PC-9 (cell line): ENCODE measurements at regions of chr11 and their contacts with region 1.

Region 1: DNA sequence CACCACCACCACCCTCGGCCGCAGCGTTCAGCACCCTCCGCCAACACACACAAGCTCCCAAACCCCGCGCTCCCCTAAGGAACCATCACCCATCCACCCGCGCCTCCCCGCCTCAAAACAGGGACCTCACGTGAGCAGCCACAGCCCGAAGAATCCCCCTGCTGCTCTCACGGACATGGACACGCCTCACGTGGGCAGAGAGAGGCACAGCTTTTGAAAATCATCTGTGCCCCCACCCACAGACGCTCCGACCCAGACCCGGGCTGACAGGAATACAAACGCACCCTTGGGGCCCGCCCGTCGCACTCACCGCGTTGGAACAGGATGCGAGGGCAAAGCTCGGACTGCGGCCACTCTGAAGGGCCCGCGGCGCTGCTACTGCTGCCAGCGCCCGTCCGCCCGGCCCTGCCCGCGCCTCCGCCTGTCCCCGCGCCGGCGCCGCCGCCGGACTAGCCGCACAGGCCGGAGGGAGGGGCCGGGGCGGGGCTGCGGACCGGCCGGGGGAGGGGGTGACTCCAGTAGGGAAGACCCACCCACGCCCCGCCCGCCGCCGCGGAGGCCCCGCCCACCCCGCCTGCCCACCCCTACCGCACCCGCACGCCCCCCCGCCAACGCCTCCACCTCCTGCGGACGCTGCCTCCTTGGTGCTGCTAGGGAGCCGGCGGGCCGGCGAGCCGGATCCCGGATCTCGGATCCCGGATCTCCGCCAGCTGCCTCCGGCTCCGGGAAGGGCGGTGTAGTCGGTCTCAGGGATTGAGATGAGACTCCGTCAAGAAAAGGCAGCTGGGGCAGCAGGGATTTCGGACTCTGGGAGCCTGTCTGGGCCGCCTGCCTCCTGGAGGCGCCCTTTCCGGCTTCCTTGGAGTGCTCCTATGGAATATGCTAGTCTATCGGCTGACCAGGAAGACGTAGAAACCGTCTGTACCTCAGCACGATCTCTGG is at the start of gene TRIM3:
- DNase-seq: peak; percentile 63 to 78
- H3K4me3 ChIP-seq: peak within 1 kb of the TSS; percentile 71; the same call in 1 of the 2 replicates
- H3K27ac ChIP-seq: peak within 1 kb of the TSS; percentile 68
- H3K4me1 ChIP-seq: no peaks in the 10 kb centered on the region
- H3K27me3 ChIP-seq: no peaks in the 10 kb centered on the region
- CTCF ChIP-seq: peak; percentile 22; the same call in 1 of the 2 replicates
- total RNA-seq, gene TRIM3: 7.1 and 9.0 TPM in 2 replicates

Region 2: GRCh38 chr11:6402561-6402981 is 71.2 kb before region 1 on chr11:
- CTCF ChIA-PET with region 1: no interaction called
- POLR2A ChIA-PET with region 1: no interaction called
- intact Hi-C with region 1: no loop called
- DNase-seq: no peak
- H3K4me3 ChIP-seq: no peak overlapping the region
- H3K27ac ChIP-seq: no peak overlapping the region
- H3K4me1 ChIP-seq: peaks cover 8% of the 10 kb centered on the region; the same call in 1 of the 2 replicates
- H3K27me3 ChIP-seq: no peaks in the 10 kb centered on the region
- CTCF ChIP-seq: no peak

Region 3: DNA sequence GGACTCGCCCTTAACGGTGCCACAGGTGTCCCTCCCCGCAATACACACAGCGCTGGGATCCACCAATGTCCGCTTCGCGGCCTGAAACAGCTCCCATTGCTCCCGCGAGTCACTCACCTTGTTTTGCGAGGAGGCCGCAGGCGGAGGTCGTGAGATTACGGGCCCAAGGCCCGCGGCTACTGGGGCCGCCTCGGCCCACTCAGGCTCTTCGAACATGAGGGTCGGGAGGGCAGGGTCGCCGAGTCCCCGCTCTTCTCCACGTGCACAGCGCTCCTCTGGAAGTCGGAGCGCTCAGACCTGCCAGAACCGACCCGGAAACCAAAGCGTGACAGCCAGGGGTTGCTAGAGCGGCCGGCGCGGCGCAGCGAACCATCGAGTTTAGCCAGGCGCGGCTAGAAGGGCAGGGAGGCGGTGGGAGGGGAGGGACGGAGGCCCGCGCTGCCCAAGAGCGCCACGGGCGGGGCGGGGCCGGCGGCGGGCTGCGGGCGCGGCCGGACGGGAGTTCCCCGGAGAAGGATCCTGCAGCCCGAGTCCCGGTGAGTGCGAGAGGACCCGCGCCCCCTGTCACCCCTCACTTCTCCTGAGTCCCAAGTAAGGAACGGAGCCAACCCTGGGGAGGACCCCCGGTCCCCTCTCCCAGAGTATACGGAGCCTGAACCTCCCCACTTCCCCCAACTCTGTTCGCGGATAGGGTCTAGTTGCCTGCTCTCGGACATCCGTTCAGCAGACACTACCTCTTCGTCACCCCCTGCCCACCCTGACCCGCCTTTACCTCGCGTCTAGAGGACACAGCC is 129.7 kb after region 1 on chr11 and contains the starts of genes ILK and RRP8:
- CTCF ChIA-PET with region 1: no interaction called
- POLR2A ChIA-PET with region 1: no interaction called
- intact Hi-C with region 1: loop called (anchors 10 kb)
- DNase-seq: peak; percentile 61 to 77
- H3K4me3 ChIP-seq: peak within 1 kb of the TSS; percentile 98
- H3K27ac ChIP-seq: peak within 1 kb of the TSS; percentile 51
- H3K4me1 ChIP-seq: peaks cover 28% of the 10 kb centered on the region
- H3K27me3 ChIP-seq: no peaks in the 10 kb centered on the region
- CTCF ChIP-seq: no peak
- total RNA-seq, gene ILK: 65.3 and 69.7 TPM in 2 replicates
- total RNA-seq, gene RRP8: 10.0 and 10.1 TPM in 2 replicates

Region 4: DNA sequence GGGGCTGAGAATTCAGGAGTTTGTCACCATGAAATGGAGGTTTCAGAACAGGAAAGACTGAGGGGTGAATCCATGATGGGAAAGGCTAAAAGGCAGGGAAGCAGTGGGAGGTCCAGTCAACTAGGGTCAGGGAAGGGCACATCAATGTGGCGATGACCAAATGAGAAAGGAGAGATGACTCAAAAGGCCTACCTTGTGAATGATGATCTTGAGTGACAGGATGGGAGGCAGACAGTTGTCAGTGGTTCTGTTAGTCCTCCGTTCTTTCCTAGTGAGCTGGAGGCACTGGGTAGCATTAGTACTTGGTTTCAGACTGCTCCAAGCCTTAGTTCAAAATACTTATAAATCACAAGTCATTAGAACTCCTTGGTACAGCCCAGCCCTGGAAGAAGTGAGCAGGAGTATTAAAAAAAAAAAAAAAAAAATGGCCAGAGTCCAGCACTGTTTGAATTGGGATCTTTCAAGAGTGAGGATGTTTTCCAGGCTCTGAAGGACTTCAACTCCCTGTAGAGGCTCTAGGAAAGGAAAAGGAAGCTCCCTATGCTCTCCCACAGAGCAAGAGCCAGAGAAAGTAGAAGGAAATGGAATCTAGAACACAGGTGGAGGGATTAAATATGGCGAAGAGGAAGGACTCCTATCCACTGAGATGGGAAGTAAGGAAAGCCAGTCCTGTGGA is 190.2 kb after region 1 on chr11:
- CTCF ChIA-PET with region 1: no interaction called
- POLR2A ChIA-PET with region 1: no interaction called
- intact Hi-C with region 1: no loop called
- DNase-seq: no peak
- H3K4me3 ChIP-seq: no peak overlapping the region
- H3K27ac ChIP-seq: no peak overlapping the region
- H3K4me1 ChIP-seq: no peaks in the 10 kb centered on the region
- H3K27me3 ChIP-seq: no peaks in the 10 kb centered on the region
- CTCF ChIP-seq: no peak